HEK293T (cell line): ENCODE measurements at regions of chr2 and their contacts with region 1.

Region 1: DNA sequence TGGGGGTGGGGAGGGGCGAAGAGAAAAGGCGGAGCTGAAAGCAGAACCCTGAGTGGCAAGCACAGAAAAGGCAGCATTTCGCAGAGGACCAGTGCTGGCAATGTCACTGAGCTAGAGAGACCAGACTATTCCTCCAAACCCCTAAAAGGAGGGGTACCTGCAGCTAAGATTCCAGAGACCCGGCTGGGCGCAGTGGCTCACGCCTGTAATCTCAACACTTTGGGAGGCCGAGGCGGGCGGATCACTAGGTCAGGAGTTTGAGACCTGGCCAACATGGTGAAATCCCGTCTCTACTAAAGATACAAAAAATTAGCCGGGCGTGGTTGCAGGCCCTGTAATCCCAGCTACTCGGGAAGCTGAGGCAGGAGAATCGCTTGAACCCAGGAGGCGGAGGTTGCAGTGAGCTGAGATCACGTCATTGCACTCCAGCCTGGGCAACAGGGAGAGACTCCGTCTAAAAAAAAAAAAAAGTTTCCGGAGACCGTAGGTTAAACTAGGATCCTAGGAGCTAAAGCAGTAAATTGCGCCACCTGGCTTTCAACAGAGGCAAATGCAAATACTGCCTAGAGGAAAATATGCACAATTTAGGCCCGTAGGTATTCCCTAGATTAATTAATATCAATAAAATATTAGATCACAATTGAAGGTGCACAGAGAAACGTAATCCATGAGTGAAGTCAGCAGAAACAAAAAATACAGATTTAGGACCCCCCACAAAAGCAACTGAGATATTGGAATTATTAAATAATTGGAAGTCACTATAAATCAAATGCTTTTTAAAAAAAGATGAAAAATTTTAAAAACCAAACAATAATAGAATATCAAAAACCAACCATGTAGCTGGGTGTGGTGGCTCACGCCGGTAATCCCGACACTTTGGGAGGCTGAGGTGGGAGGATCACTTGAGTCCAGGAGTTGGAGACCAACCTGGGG is 4.9 kb downstream of the UCN start:
- DNase-seq: peak; percentile 67

Region 2: DNA sequence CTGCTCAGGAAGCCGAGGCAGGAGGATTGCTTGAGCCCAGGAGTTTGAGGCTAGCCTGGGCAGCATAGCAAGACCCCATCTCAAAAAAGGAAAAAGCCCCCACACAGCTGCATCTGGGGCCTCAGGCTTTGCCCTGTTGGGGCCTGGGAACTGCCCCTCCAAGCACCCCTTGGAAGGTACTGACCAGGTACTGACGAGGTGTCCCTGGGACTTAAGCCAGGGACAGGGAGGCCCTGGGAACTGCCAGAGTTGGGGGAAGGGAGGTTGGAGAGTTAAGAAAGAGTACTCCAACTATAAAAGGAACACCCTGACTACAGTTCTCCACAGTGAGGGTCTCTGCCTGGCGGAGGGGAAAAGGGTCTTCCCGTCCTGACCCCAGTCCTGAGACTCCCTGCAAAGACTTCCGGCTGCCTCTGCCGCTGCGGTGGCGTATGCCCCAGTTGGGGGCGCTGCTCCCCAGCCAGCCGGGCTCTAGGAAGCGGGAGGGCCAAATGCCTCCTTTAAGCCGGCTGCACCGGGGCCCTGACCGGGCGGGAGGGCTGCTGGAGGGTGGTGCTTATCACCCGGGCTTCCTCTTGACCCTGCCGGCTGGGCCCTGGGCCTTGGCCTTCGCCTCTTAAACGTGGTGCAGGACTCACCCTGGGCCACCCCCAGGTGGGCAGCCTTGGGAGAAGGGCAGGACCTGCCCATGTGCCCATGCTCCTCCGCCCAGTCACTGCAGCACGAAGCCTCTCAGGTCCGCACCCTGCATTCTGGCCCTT is 53.3 kb before region 1 on chr2:
- CTCF ChIA-PET with region 1: interaction called, 10 read pairs
- POLR2A ChIA-PET with region 1: no interaction called
- DNase-seq: peak; percentile 82

Region 3: GRCh38 chr2:27281855-27282559 is 21.4 kb before region 1 on chr2 and contains the start of gene TRIM54:
- CTCF ChIA-PET with region 1: interaction called, 17 read pairs
- POLR2A ChIA-PET with region 1: interaction called, 8 read pairs
- DNase-seq: no peak